GM13977 (cell line): ENCODE measurements at regions of chr5 and their contacts with region 1.

Region 1: GRCh38 chr5:159017786-159018185 is 81.9 kb downstream of the EBF1 start:
- DNase-seq: no peak
- CTCF ChIP-seq: no peak

Region 2: DNA sequence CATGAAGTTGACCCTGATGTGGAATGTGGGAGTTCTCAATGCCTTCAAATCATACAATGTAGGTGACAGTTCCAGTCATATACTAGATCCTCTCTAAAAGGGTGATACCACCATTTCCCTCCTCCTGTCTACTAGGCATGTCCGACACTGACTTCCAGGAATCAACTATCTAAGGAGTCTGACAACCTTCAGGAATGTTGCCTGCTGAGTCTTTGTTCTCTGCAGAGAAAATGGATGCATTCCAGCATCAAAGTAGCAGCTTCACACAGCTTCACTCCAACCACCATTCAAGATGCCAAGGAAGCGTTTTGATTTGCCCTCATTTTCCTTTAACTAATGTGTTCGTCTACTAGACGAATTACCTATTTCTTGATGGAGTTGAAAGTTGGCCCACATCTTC is 448.3 kb before region 1 on chr5:
- in situ Hi-C with region 1: no loop called
- DNase-seq: no peak
- CTCF ChIP-seq: no peak

Region 3: GRCh38 chr5:158953929-158954534 is 63.8 kb before region 1 on chr5:
- in situ Hi-C with region 1: loop called (anchors 10 kb)
- DNase-seq: peak; percentile 57
- CTCF ChIP-seq: no peak